Right ventricle myocardium inferior (tissue), 1 donor: ENCODE measurements at regions of chr6 and their contacts with region 1.

Region 1: DNA sequence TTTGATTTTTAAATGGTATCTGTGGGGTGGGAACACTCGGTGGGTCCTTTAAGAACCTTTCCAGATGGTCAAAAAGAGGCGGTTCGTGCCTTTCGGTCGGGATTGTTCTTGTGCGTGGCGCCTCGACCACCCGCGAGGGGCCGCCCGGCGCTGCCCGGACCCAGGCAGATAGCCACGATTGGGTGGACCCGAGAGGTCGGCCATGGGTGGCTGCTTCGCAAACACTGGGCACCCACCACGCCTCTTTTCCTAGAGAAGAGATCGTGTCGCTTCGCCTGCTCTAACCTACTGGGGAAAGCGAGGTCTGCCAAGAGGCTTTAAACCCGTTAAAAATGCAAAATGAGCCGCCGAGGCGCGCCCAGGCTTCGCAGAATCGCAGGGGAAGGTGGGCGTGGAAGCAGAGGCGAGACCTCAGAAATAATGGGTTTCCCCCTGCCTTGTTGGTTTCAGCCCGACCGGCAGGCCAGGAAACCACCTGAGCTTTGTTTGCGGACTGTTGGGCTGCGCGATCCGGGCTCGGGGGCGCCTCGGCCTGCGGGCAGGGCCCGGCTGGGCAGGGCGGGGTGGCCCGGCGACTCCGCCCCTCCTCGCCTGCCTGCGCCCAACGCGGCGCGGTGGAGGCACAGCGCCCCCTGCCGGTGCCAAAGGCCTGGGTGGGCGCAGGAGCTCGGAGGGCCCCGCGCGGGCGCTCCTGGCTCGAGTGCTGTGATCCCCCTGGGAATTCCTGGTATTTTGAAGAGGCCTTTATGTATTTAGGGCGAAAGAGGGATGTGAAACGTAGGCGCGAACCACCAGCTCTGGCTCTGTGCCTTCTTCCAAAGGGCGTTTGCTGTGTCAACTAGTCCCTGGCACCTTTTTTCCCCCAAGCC is 1.6 kb downstream of the MARCKS start:
- DNase-seq: peak; percentile 94
- ATAC-seq: peak; percentile 91

Region 2: DNA sequence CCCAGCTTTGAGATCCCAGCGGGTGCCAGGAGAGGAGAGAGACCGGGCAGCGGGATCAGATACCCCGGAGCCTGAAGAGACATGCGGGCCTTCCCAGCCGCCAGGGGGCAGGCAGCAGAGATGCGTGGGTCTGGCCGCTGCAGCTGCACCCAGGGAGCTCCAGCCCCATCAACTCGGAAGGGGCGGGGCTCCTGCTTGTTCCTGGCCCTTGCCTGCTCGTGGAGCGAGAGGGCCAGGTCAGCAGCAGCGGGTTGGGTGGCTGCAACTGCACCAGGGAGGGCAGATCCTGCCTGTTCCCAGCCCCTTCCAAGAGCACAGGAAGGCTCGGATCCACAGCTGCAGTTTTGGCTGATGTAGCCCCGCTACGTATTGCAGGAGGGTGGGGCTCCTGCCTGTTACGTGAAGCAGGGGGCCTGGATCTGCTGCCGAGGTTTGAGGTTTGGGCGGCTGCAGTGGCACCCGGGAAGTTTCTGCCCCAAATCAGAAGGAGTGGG is 978.7 kb before region 1 on chr6:
- intact Hi-C with region 1: loop called (anchors 10 kb)
- DNase-seq: peak; percentile 68
- ATAC-seq: peak; percentile 39

Region 3: GRCh38 chr6:113306552-113307145 is 552.1 kb before region 1 on chr6:
- intact Hi-C with region 1: loop called (anchors 1 kb)
- DNase-seq: peak; percentile 73
- ATAC-seq: no peak

Region 4: DNA sequence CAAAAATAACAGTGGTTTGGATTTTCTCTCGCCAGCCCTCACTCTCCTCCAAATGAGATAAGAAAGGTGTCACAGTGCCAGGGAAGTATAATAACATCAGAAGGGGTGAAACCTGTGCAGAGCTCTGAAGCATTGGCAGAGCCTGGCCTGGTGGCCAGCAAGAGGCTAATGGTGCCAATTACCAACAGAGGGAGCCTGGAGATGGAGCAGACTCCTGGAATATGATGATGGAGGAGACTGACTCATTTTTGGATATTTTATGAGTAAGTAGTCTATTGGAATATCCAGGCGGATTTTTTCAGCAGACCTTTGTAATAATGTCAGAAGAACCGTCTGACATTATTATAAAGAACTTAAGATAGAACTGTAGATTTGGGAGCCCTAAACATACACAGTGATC is 444.2 kb before region 1 on chr6:
- intact Hi-C with region 1: loop called (anchors 5 kb)
- DNase-seq: no peak
- ATAC-seq: peak; percentile 79

Region 5: DNA sequence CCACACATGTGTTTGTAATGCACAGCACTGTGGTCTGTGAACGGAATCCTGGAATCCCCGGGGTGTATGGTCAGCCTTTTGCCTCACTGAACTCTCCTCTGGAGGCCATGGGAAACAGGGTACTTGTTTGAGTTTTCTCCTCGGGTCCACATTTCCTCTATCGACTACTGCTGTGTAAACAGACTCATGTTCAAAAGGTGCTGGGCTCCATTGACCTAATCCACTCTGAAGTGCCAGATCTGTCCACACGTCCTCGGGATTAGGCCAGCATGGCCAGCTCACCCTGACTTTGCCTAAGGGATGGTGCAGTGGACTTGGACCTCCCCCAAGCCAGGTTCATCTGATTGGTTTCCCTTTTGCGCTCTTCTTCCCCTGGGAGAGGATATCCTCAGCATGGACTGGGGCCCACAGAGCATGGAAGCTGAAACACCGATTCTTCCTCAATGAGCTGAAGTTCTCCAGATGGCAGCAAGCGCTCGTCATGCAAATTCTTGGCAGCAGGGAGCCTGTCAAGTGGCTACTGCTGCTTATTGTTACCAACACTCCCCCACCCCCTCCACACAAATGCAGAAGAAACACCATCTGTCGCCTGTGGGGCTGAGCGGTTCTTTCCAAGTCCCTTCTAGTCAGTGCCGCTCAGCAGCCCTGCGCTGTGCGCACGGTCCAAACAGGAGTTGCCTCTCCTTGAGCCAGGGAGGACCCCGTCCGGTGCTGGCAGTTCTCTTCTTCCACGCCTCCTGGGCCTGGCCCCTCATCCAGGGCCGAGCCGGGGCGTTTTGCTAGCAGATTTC is 294.1 kb before region 1 on chr6:
- intact Hi-C with region 1: loop called (anchors 2 kb)
- DNase-seq: peak; percentile 90
- ATAC-seq: peak; percentile 99

Region 6: GRCh38 chr6:113732384-113732966 is 126.2 kb before region 1 on chr6:
- intact Hi-C with region 1: loop called (anchors 5 kb)
- DNase-seq: no peak
- ATAC-seq: peak; percentile 97

Region 7: GRCh38 chr6:113909234-113909856 is 50.6 kb after region 1 on chr6:
- intact Hi-C with region 1: loop called (anchors 5 kb)
- DNase-seq: no peak
- ATAC-seq: no peak

Region 8: DNA sequence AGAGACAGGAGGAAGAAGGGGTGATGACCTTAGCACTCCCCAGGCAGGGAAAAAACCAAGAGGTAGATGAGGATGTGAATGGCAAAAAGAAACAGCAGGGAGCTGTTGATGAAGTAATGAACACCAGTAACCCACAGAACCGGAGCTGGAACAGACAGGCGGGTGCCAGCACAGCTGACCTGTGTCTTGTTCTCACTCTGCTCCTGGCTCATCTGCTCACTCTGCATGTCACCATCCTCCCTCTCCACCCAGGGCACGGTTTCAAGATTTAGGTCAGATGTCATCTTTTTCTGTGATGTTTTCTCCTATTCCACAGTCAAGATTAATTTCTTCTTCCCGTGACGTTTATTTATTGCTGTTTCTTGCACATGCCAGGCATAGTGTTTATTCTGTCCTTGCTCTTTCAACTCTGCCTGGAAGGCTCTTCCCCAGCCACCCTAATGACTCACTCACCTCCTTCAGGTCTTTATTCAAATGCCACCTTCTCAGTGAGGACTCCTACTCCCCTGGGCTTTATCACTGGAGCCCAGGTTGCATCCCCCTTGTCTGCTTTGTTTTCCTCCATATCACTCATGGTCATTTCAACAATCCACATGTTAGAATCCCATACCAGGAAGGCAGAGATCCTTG is 276.8 kb after region 1 on chr6:
- intact Hi-C with region 1: no loop called
- DNase-seq: no peak
- ATAC-seq: no peak